ENCODE measurements at regions of chr10 and their contacts with region 1.

Region 1: DNA sequence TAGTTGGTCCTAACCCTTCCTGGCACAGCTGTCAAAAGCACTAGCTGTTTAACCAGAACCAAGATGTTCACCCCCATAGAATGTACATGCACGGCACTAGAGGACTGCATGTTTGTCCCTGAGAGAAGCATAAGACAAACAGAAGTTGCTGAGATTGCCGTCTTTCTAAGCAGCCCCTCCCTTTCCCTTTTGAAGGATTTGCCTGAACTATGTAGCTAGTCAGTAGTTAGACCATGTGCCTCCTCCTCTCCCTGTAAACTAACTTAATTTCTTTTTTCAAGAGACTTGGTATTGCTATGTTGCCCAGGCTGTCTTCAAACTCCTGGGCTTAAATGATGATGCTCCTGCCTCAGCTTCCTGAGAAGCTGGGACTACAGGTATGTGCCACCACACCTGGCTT is 40.7 kb downstream of the TBC1D12 start:
- DNase-seq: no peak
- ATAC-seq: no peak
- H3K4me3 ChIP-seq: no peak overlapping the region
- H3K27ac ChIP-seq: no peak overlapping the region
- H3K4me1 ChIP-seq: peaks cover 3% of the 10 kb centered on the region
- H3K27me3 ChIP-seq: no peaks in the 10 kb centered on the region
- CTCF ChIP-seq: no peak

Region 2: GRCh38 chr10:94279835-94280709 is 163.0 kb before region 1 on chr10:
- intact Hi-C with region 1: loop called in 1 of 2 experiments (anchors 5 kb)
- DNase-seq: peak; percentile 44 to 70
- ATAC-seq: peak; percentile 68 to 94 (median 75)
- H3K4me3 ChIP-seq: no peak overlapping the region
- H3K27ac ChIP-seq: no peak overlapping the region
- H3K4me1 ChIP-seq: peaks cover 8% of the 10 kb centered on the region
- H3K27me3 ChIP-seq: no peaks in the 10 kb centered on the region
- CTCF ChIP-seq: peak; percentile 84

Region 3: DNA sequence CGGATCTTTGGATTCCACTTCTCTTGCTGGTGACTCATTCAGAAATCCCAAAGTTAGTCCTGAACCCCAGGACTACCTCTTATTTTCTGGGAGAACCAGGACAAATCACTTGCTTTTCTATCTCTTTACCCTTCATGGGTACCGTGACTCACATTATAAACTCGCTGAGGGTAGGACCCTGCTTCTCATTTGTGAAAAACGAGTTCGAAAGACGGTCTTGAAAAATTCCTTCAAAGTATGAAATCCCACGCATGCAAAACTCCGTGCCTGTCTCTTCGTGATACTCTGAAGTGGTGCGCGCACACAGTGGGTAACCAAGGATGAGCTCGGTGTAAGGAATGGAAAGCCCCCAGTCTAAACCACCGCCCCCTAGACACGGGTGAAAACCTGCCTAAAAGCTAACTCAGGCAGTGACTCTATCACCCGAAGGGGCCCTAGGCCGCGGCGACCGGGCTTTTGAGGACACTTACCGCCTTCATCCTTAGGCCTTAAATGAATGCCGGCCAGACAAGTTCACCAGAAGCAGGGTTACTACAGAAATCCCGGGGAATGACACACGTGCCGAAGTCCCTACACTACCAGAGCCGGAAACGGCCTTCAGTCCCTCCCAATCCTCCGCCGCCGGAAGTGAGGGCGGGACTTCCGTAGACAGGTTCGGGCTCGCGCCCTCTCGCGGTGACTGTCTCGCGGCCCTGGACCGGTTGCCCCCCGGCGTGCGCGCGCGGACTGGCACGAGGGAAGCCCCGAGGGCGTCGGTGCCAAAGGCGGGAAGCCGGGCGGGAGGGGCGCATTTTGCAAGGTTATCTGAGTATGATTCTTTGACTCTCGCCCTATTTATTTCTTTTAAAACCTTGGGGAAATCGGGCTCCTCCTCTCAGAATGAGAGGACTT is 80.4 kb before region 1 on chr10 and contains the start of gene NOC3L:
- intact Hi-C with region 1: loop called (anchors 2 to 10 kb)
- DNase-seq: peak; percentile 96 to 98
- ATAC-seq: peak; percentile 100
- H3K4me3 ChIP-seq: peak within 1 kb of the TSS; percentile 87
- H3K27ac ChIP-seq: peak within 1 kb of the TSS; percentile 90
- H3K4me1 ChIP-seq: peaks cover 17% of the 10 kb centered on the region
- H3K27me3 ChIP-seq: no peaks in the 10 kb centered on the region
- CTCF ChIP-seq: peak; percentile 91
- total RNA-seq, gene NOC3L: 13.6 to 18.7 (median 17.1) TPM

Region 4: GRCh38 chr10:94402015-94402842 is 40.8 kb before region 1 on chr10 and contains the start of gene TBC1D12:
- intact Hi-C with region 1: loop called in 1 of 2 experiments (anchors 5 kb)
- DNase-seq: peak; percentile 96 to 98
- ATAC-seq: peak; percentile 97 to 98 (median 98)
- H3K4me3 ChIP-seq: peak within 1 kb of the TSS; percentile 99
- H3K27ac ChIP-seq: peak within 1 kb of the TSS; percentile 97
- H3K4me1 ChIP-seq: peaks cover 12% of the 10 kb centered on the region
- H3K27me3 ChIP-seq: peaks cover 0 to 6% (median 0%) of the 10 kb centered on the region in 3 donors
- CTCF ChIP-seq: no peak
- total RNA-seq, gene TBC1D12: 5.0 to 5.4 (median 5.2) TPM